ENCODE measurements at regions of chr4 and their contacts with region 1.

Region 1: GRCh38 chr4:173257732-173258717 is 76.1 kb downstream of the HMGB2 start:
- DNase-seq: peak; percentile 52 to 65 (median 57)
- ATAC-seq: peak; percentile 86 to 98 (median 90)
- H3K4me3 ChIP-seq: no peak overlapping the region
- H3K27ac ChIP-seq: no peak overlapping the region
- H3K4me1 ChIP-seq: peaks cover 0 to 3% (median 0%) of the 10 kb centered on the region in 12 donors
- H3K27me3 ChIP-seq: no peaks in the 10 kb centered on the region
- CTCF ChIP-seq: peak; percentile 56 to 90 (median 82)
- POLR2A ChIP-seq: no peak

Region 2: DNA sequence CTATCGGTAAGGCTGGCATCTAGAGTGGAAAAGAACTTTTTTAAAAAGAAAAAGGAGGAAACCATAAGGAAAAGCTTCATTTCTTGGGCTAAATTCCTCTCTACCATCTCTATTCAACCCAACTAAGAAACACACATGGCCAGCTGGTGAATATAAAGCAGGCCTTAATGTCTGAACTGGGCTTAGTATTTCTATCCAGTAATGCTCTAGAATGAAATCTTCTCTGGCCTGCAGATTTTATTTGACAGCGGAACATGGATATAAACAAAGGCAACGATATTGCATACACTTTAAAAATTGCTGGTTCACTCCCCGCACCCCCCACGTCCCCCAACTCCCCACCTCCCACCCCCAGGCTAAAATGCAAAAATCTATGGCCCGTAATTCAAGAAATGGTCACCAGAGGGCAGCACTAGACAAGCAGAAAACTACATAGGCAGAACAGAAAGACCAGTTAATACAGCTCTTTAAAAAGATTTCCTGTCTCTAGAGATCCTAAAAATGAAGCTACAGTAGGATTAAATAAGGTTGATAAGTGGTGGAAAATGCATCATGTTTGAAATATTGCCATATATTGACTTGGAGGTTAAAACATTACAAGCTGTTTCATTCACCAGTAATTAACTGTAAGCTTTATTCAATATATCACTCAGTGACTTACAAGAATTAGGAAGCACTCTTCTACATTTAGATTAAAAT is 244.6 kb before region 1 on chr4:
- intact Hi-C with region 1: loop called (anchors 1 to 5 kb)
- DNase-seq: peak in 1 of 5 donors; percentile 23
- ATAC-seq: peak in 3 of 4 donors; percentile 46 to 71 (median 64)
- H3K4me3 ChIP-seq: no peak overlapping the region
- H3K27ac ChIP-seq: no peak overlapping the region
- H3K4me1 ChIP-seq: peaks cover 0 to 5% (median 0%) of the 10 kb centered on the region in 12 donors
- H3K27me3 ChIP-seq: no peaks in the 10 kb centered on the region
- CTCF ChIP-seq: peak; percentile 56 to 92 (median 70)
- POLR2A ChIP-seq: no peak

Region 3: GRCh38 chr4:173025131-173025530 is 232.9 kb before region 1 on chr4:
- intact Hi-C with region 1: loop called in 7 of 10 experiments (anchors 1 to 5 kb)
- DNase-seq: peak in 2 of 5 donors; percentile 28 to 57
- ATAC-seq: peak in 3 of 4 donors; percentile 26 to 82 (median 74)
- H3K4me3 ChIP-seq: no peak overlapping the region
- H3K27ac ChIP-seq: no peak overlapping the region
- H3K4me1 ChIP-seq: peaks cover 0 to 4% (median 0%) of the 10 kb centered on the region in 12 donors
- H3K27me3 ChIP-seq: no peaks in the 10 kb centered on the region
- CTCF ChIP-seq: peak; percentile 52 to 77 (median 66)
- POLR2A ChIP-seq: no peak